Activated CD4-positive, alpha-beta T cell treated with anti-CD3 and anti-CD28 coated beads, Interleukin-2, amount 10 ng/mL, durations not matched to agents 24 days and 14 days (primary cell): ENCODE measurements at regions of chr4 and their contacts with region 1.

Region 1: DNA sequence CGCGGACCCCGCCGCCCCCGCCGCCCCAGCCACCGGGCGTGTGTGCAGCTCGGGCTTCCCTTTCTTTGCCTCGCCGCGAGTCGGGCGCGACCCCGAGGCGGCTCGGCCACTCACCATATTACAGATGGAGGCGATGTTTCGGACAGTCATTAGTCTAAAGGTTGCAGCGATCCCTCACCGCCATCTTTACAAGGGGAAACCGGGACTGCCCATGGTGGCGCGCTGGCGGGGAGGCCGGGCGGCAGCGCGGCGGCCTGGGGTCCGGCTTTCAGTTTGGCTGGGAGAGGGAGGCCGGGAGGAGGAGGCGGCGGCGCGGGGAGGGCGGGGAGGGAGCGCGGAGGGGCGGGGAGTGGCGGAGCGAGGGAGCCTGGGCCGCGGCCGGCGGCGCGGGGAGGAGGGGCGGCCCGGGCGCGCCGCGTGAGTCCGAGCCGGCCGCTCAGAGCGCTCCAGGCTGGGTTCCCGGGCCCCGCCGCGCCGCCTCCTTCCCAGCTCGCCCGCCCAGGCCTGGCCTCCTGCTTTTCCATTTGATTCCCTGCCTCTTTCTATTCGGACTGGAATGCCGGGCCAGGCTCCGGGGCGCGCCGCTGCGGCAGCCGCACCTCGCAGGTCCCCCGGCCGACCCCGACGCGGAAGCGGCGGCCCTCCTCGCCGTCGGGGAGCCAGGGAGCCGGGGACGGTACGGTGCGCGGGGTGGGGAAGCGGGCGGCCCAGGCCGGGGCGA is at the start of gene USP46:
- DNase-seq: peak; percentile 83
- H3K4me3 Mint-ChIP-seq: peak within 1 kb of the TSS; percentile 86
- H3K27ac Mint-ChIP-seq: peak within 1 kb of the TSS; percentile 80
- H3K4me1 Mint-ChIP-seq: peaks cover 19% of the 10 kb centered on the region
- H3K27me3 Mint-ChIP-seq: peaks cover 15% of the 10 kb centered on the region
- total RNA-seq, gene USP46: 8.4 and 10.2 TPM in 2 replicates

Region 2: DNA sequence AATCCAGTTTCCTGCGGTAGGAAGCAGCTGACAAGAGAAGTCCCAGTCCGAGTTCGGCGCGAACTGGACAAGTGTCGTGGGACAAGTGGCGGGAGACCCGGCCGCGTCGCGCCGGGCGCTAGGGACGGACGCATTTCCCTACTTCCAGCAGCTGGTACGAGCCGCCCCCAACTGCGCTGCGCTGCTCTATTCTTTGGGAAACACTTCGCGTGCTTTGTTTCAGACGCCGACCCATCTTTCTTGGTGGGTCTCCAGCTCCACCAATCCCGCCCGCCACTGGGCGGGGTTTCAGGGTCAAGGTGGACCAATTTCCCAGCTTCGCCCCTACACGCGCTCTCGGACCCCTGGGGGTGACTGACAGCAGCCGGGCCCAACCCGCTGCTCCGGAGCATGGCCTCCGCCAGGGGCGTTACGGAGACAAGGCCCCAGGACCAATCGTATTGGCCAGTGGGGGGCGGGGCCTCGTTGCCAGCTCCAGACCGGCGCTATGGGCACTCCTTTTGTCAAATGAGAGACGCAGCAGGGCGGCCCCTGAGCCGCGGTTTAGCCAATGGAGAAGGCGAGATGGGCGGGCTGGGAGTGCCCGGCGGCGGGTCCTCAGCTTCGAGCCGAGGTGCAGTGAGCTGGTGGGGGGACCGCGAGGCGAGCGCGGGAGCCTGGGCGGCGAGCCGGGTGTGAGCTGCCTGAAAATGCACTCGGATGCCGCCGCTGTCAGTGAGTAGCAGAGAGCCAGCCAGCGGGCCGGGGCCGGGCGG is 816.4 kb before region 1 on chr4 and contains the start of gene DCUN1D4:
- intact Hi-C with region 1: loop called (anchors 5 kb)
- DNase-seq: peak; percentile 99
- H3K4me3 Mint-ChIP-seq: peak within 1 kb of the TSS; percentile 94
- H3K27ac Mint-ChIP-seq: peak within 1 kb of the TSS; percentile 98
- H3K4me1 Mint-ChIP-seq: peaks cover 18% of the 10 kb centered on the region
- H3K27me3 Mint-ChIP-seq: peaks cover 8% of the 10 kb centered on the region
- total RNA-seq, gene DCUN1D4: 33.5 and 34.3 TPM in 2 replicates

Region 3: DNA sequence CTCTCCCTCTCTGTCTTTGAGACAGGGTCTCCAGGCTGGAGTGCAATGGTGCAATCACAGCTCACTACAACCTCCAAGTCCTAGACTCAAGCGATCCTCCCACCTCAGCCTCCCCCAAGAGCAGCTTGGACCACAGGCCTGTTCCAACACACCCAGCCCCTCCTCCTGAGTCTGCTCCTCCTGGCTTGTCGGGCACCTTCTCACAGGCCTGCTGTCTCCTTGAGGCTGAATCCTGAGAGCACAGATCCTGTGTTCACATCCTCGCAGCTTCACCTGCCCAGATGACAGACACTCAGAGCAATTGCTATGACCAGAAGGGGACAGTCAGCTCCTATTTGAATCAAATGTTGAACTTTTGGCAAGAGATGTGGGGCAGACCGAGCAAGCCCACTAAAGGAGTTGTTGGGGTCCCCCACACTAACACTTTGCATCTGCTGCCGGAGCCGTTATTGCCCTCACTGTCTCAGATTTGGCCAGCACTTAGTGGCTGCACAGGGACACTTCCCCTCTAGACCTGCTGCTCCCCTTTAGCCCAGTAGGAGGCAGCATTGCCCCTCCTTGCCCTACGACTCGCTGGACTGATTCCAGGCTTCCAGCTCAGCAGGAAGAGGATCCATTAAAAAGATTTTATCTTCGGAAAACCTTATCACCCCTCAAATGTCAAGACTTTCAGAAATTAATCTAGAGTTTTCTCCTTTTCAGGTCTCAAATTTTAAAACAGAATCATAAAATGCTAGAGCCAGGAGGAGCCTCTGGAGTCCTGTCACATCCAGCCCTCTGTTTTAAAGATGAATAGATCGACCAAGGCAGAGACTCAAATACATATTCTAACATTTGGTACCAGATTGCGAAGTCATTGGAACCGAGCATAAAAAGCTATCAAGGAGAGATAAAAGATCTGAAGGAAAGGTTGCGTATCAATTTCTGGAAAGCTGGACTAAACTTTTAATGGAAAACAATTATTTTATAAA is 113.8 kb before region 1 on chr4:
- intact Hi-C with region 1: loop called (anchors 10 kb)
- DNase-seq: peak; percentile 88
- H3K4me3 Mint-ChIP-seq: no peak overlapping the region
- H3K27ac Mint-ChIP-seq: no peak overlapping the region
- H3K4me1 Mint-ChIP-seq: no peaks in the 10 kb centered on the region
- H3K27me3 Mint-ChIP-seq: peaks cover 3% of the 10 kb centered on the region

Region 4: DNA sequence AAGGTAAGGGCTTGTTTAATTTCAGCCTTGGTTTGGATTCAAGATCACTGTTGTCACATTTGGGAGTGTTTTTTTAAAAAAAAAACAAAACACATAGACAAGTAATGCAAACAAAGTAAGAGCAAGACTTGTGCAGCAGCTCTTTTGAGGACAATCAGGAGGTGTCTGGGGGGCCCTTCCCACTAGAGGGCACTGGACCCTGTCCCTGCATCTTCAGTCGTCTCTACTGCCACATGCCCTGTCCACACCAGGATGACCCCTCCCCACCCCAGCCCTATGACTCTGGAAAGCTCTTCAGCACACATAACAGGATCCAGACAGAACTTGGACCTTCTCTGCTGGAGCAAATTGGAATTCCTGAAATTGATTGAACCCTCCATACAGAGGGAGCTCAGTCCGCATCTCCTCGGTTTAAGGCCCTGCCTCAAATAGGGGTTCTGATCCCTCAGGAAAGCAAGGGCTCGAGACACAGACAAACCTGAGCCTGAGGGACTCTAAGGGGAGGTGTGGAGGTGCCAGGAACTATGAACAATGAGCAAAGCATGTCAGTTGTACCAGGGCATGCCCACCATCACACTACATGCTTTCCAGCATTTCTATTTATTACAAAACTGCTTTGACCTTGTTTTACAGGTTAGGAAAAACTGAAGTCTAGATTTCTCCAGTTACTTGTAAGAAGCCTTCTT is 70.9 kb before region 1 on chr4:
- intact Hi-C with region 1: loop called (anchors 5 kb)
- DNase-seq: peak; percentile 59
- H3K4me3 Mint-ChIP-seq: no peak overlapping the region
- H3K27ac Mint-ChIP-seq: peak overlapping the region; percentile 2
- H3K4me1 Mint-ChIP-seq: peaks cover 18% of the 10 kb centered on the region
- H3K27me3 Mint-ChIP-seq: peaks cover 6% of the 10 kb centered on the region

Region 5: DNA sequence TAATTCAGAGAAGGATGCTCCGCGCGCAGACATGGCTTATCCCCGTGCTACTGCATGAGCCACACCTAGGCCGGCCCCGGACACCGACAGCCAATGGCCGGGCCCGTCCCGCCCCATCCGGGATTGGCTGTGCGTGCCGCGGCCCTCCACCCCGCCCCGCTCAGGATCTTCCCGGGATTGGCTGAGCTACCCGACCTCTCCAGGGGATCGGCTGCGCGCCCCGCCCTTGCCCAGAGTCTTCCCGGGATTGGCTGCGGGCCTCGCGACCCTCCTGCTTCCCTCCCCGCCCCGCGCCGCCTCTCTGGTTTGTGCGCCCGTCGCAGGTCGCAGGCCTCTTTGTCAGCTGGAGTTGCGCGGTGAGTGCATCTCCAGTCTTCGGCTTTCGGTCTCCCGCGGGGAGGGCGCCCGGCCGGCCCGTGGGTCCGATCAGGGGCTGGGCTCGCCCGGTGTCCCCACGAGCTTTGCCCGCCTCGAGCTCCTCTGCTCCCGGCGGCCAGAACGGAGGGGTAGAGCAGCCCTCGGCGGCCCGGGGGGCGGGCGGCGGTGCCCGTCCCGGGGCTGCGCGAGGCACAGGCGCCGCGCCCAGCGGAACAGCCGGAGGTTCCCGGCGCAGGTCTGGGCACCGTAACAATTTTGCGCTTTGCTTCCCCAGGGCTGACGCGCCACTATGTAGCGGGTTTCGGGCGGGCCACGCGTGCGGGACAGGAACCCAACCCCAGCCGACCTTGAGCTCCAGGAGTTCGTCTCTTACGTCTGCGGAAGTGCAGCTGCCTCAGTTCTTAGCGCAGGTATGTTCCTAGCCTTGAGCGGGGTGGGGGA is 53.2 kb after region 1 on chr4:
- intact Hi-C with region 1: loop called (anchors 1 kb)
- DNase-seq: peak; percentile 99
- H3K4me3 Mint-ChIP-seq: peak overlapping the region; percentile 98
- H3K27ac Mint-ChIP-seq: peak overlapping the region; percentile 99
- H3K4me1 Mint-ChIP-seq: peaks cover 48% of the 10 kb centered on the region
- H3K27me3 Mint-ChIP-seq: no peaks in the 10 kb centered on the region

Region 6: GRCh38 chr4:52721968-52722815 is 63.0 kb after region 1 on chr4:
- intact Hi-C with region 1: loop called (anchors 2 kb)
- DNase-seq: peak; percentile 95
- H3K4me3 Mint-ChIP-seq: peak overlapping the region; percentile 82
- H3K27ac Mint-ChIP-seq: peak overlapping the region; percentile 69
- H3K4me1 Mint-ChIP-seq: peaks cover 4% of the 10 kb centered on the region
- H3K27me3 Mint-ChIP-seq: peaks cover 10% of the 10 kb centered on the region

Region 7: DNA sequence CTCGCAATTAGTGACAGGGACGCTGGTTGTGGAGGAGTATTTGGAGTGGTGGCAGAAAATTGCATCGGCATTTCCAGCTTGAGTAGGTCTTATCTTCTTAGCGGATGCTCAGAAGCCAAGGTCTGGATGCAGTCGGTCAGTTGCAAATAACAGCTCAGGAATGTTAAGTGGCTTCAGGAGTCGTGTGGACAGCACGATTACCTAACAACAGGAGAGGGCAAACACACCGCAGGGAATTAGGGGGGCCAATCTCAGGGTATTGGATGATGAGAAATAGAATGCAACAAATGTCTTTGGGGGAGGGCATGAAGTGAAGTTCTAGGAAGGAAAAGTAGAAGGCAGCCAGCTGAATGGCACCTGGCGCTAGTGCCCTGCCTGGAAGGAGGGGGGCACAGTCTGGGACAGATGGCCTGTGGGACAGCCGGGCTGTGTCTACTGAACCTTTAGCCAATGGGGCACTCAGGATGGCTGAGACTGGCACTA is 214.7 kb after region 1 on chr4:
- intact Hi-C with region 1: no loop called
- DNase-seq: no peak
- H3K4me3 Mint-ChIP-seq: no peak overlapping the region
- H3K27ac Mint-ChIP-seq: no peak overlapping the region
- H3K4me1 Mint-ChIP-seq: peaks cover 5% of the 10 kb centered on the region
- H3K27me3 Mint-ChIP-seq: no peaks in the 10 kb centered on the region